Activated T-helper 1 cell treated with anti-CD3 and anti-CD28 coated beads, Interleukin-12 subunit alpha, Interleukin-12 subunit beta, Interleukin-2, Interleukin-4 antibody, amounts not matched to agents 30 ng/mL and 10 ng/mL and 1 ng/mL, durations not matched to agents 14 hours and 24 hours and 36 hours (primary cell): ENCODE measurements at regions of chr4 and their contacts with region 1.

Region 1: GRCh38 chr4:77586951-77587383 is 18.7 kb upstream of the CXCL13 start:
- DNase-seq: peak; percentile 72
- H3K4me3 Mint-ChIP-seq: peak overlapping the region; percentile 49
- H3K27ac Mint-ChIP-seq: peak overlapping the region; percentile 77
- H3K4me1 Mint-ChIP-seq: peaks cover 61% of the 10 kb centered on the region
- H3K27me3 Mint-ChIP-seq: no peaks in the 10 kb centered on the region

Region 2: DNA sequence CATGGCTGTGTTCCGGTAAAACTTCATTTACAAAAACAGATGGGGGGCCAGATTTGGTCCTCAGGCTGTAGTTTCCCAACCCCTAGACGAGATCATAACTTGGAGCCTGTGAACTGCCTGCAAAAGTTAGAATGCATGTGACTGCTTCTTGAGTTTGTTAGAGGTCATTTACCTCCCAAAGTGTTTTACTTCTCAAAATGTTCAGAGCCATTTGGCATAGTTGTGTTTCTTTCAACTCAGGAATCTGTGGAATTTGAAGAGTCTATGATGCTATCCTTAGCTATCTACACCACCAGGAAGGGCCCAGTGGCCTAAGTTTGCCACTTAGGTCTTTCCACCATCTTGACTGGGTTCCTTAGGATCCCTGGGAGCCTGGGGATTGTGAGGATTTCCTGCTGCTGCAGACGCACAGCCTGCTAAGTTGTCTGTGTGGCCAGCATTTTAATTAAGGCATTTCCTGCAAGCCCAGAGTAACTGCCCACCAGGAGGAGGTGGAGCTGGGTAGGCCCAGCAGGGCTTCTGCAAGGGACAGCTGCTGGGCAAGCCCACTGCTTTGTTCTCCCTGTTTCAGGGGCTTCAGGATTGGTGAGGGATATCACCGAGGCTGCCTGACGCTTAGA is 564.3 kb before region 1 on chr4:
- intact Hi-C with region 1: loop called (anchors 1 kb)
- DNase-seq: no peak
- H3K4me3 Mint-ChIP-seq: no peak overlapping the region
- H3K27ac Mint-ChIP-seq: no peak overlapping the region
- H3K4me1 Mint-ChIP-seq: peaks cover 21% of the 10 kb centered on the region
- H3K27me3 Mint-ChIP-seq: peaks cover 5% of the 10 kb centered on the region

Region 3: DNA sequence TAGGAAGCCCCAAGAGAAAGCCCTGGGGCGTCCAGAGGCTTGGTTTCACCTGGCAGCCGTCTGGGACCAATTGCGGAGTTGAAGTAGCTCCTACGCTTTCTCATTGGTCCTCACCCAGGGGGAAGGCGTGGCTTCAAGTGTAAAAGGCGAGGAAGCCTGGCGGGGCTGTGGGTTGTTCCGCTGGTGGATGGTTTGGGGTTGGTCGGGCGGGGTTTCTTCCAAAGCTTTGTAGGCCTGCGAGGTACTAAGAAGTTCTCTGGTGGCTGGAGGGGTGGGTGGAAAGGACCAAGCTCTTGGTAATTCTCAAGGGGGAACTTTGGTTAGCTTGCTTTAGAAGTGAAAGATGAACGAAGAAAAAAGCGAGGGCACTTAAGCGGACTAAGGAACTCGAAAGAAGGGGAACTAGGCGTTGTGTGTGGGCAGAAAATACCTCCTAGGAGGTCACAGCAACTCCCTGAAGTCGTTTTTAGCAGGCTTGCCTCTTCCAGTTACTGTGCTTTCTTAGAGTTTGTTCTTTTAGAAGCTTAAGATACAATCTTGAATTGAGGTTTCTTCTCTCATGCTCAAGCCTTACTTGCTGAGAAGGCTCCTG is 393.4 kb before region 1 on chr4:
- intact Hi-C with region 1: no loop called
- DNase-seq: peak; percentile 67
- H3K4me3 Mint-ChIP-seq: peak overlapping the region; percentile 83
- H3K27ac Mint-ChIP-seq: peak overlapping the region; percentile 79
- H3K4me1 Mint-ChIP-seq: peaks cover 20% of the 10 kb centered on the region
- H3K27me3 Mint-ChIP-seq: peaks cover 6% of the 10 kb centered on the region

Region 4: GRCh38 chr4:77538560-77539157 is 48.3 kb before region 1 on chr4:
- intact Hi-C with region 1: loop called (anchors 1 kb)
- DNase-seq: no peak
- H3K4me3 Mint-ChIP-seq: peak overlapping the region; percentile 20
- H3K27ac Mint-ChIP-seq: peak overlapping the region; percentile 88
- H3K4me1 Mint-ChIP-seq: peaks cover 40% of the 10 kb centered on the region
- H3K27me3 Mint-ChIP-seq: peaks cover 5% of the 10 kb centered on the region

Region 5: GRCh38 chr4:77629885-77630284 is 42.9 kb after region 1 on chr4:
- intact Hi-C with region 1: loop called (anchors 2 kb)
- DNase-seq: no peak
- H3K4me3 Mint-ChIP-seq: no peak overlapping the region
- H3K27ac Mint-ChIP-seq: peak overlapping the region; percentile 12
- H3K4me1 Mint-ChIP-seq: peaks cover 22% of the 10 kb centered on the region
- H3K27me3 Mint-ChIP-seq: no peaks in the 10 kb centered on the region

Region 6: DNA sequence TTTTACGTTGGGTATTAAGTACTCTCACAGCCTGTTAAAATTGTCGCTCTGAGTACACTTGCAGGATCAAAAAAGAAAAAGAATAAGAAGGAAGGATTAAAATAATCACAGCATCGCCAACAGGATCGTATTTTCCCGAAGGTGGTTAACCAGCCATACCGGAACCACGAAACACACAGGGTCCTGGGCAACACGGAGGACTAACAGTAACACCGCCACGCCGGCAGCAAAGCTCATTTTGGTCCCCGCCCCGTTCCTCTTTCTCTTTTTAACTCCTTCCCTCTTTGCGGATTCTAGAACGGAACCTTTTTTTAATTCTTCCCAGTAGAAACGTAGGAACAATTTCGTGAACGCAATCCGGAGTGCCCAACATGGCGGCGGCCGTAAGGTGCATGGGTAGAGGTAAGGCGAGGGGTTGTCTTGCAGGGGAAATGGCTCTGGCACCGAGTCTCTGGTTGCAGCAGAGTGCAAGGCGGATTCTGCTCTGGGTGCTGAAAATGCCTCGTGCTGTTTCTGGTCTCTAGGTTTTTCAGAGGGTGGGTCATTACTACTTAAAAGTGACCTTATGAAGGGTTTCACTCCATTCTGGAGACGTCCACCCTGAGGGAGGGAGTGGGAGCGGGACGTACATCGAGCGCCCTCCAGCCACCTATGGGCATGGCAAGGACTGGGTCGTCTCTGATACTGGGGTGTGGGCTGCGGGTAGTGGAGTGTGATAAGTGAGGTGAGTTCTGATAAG is 275.7 kb after region 1 on chr4 and contains the start of gene MRPL1:
- intact Hi-C with region 1: loop called (anchors 2 kb)
- DNase-seq: peak; percentile 84
- H3K4me3 Mint-ChIP-seq: peak within 1 kb of the TSS; percentile 90
- H3K27ac Mint-ChIP-seq: peak within 1 kb of the TSS; percentile 94
- H3K4me1 Mint-ChIP-seq: peaks cover 48% of the 10 kb centered on the region
- H3K27me3 Mint-ChIP-seq: no peaks in the 10 kb centered on the region
- total RNA-seq, gene MRPL1: 72.7 and 75.0 TPM in 2 replicates

Region 7: GRCh38 chr4:78775303-78776030 is 1188.5 kb after region 1 on chr4:
- intact Hi-C with region 1: loop called (anchors 1 kb)
- DNase-seq: peak; percentile 86
- H3K4me3 Mint-ChIP-seq: peak overlapping the region; percentile 95
- H3K27ac Mint-ChIP-seq: peak overlapping the region; percentile 96
- H3K4me1 Mint-ChIP-seq: peaks cover 38% of the 10 kb centered on the region
- H3K27me3 Mint-ChIP-seq: no peaks in the 10 kb centered on the region